Panc1 (cell line): ENCODE measurements at regions of chr19 and their contacts with region 1.

Region 1: GRCh38 chr19:56252699-56253422 is 19.7 kb upstream of the EDDM13 start:
- DNase-seq: peak; percentile 58
- ATAC-seq: peak; percentile 94
- H3K4me3 ChIP-seq: no peak overlapping the region
- H3K27ac ChIP-seq: peak overlapping the region; percentile 66
- H3K4me1 ChIP-seq: no peaks in the 10 kb centered on the region
- H3K27me3 ChIP-seq: no peaks in the 10 kb centered on the region
- CTCF ChIP-seq: peak; percentile 98

Region 2: DNA sequence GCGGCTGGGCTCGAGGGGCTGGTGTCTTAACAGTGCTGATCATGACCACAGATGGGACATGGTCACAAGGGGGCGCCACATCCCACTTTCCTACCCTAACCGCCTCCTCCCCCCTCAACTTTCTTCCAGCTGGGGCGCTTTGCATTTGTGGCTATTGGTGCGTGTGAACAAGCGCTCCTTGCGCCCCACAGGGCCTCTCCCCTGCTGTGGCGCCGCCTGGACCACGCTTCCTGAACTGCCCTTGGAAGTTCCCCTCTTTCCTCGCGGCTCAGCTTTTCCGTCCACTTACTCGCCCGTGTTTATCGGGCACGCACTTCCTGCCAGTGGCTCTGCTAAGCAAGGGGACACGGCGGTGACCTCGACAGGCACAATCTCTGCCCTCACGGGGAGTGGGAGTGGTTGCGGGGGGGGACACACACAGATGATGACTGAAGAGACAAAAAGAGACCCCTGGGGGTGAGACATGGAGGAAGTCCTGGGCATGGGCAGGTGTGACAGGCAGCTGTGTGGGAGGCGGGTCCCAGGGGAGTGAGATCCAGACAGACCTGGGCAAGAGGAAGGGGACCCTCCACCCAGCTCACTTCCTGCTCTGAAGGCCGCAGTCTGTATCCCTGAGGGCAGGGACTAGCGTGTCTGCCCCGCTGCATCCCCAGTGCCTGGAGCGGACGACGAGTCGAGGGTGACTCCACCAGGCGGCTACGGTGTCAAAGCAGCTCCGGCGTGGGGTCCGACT is 172.0 kb before region 1 on chr19:
- CTCF ChIA-PET with region 1: interaction called, 12 read pairs
- POLR2A ChIA-PET with region 1: interaction called, 6 read pairs
- in situ Hi-C with region 1: no loop called
- intact Hi-C with region 1: loop called (anchors 10 kb)
- DNase-seq: no peak
- ATAC-seq: peak; percentile 64
- H3K4me3 ChIP-seq: peak overlapping the region; percentile 32 to 64
- H3K27ac ChIP-seq: peak overlapping the region; percentile 62
- H3K4me1 ChIP-seq: peaks cover 11% of the 10 kb centered on the region
- H3K27me3 ChIP-seq: no peaks in the 10 kb centered on the region
- CTCF ChIP-seq: peak; percentile 78; the same call in 1 of the 2 replicates

Region 3: GRCh38 chr19:56162258-56162657 is 90.6 kb before region 1 on chr19:
- CTCF ChIA-PET with region 1: interaction called, 10 read pairs
- POLR2A ChIA-PET with region 1: no interaction called
- in situ Hi-C with region 1: no loop called
- intact Hi-C with region 1: no loop called
- DNase-seq: no peak
- ATAC-seq: peak; percentile 52; the same call in 1 of the 2 replicates
- H3K4me3 ChIP-seq: no peak overlapping the region
- H3K27ac ChIP-seq: no peak overlapping the region
- H3K4me1 ChIP-seq: no peaks in the 10 kb centered on the region
- H3K27me3 ChIP-seq: no peaks in the 10 kb centered on the region
- CTCF ChIP-seq: no peak

Region 4: DNA sequence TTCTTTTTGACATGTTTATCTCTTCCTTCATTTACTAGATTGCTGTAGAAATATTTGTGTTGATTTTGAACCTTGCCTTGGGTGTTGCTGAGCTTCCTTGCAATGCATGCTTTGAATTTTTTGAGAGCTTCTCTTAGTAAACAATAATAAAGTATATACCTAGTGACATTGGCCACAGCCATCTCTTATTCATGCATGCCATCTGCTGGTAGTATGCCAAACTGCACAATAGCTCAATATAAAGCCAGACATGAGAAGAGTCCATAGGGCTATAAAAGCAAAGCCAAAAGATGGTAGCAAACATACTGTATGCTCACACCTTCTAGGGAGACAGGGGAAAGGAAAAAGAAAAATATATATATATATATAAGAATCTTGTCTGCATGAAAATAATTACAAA is 80.6 kb after region 1 on chr19:
- CTCF ChIA-PET with region 1: interaction called, 128 read pairs
- POLR2A ChIA-PET with region 1: interaction called, 3 read pairs
- in situ Hi-C with region 1: no loop called
- intact Hi-C with region 1: loop called (anchors 1 kb)
- DNase-seq: no peak
- ATAC-seq: peak; percentile 96
- H3K4me3 ChIP-seq: no peak overlapping the region
- H3K27ac ChIP-seq: no peak overlapping the region
- H3K4me1 ChIP-seq: no peaks in the 10 kb centered on the region
- H3K27me3 ChIP-seq: peaks cover 3% of the 10 kb centered on the region; the same call in 1 of the 2 replicates
- CTCF ChIP-seq: peak; percentile 77; the same call in 1 of the 2 replicates